ENCODE measurements at regions of chr11 and their contacts with region 1.

Region 1: GRCh38 chr11:63738720-63739360 is 29.7 kb downstream of the ZFTA start:
- DNase-seq: no peak

Region 2: GRCh38 chr11:63478896-63479295 is 259.9 kb before region 1 on chr11:
- intact Hi-C with region 1: loop called (anchors 10 kb)
- DNase-seq: no peak

Region 3: DNA sequence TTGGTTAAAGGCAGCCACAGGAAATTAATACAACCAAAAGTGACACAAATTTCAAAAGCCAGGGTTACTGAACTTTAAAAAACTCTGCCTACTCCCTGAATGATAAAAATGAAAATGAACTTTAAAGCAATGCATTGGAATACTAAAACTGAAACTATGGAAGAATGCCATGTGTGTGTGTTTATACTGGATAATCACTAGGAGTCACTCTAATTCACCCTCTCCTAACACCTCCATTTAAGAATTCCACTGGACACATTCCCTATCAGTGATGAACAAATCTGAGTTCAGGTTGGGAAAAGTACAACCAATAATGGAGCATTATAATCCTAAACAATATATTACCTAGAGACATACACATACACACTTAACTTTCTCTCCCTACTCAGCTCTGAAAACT is 97.1 kb before region 1 on chr11:
- intact Hi-C with region 1: loop called (anchors 5 kb)
- DNase-seq: no peak

Region 4: GRCh38 chr11:63671322-63672155 is 67.3 kb before region 1 on chr11 and contains the start of gene ATL3:
- intact Hi-C with region 1: loop called (anchors 5 kb)
- DNase-seq: peak; percentile 99
- total RNA-seq, gene ATL3: 15.1 TPM